Ascending aorta (tissue), 2 donors: ENCODE measurements at regions of chr5 and their contacts with region 1.

Region 1: DNA sequence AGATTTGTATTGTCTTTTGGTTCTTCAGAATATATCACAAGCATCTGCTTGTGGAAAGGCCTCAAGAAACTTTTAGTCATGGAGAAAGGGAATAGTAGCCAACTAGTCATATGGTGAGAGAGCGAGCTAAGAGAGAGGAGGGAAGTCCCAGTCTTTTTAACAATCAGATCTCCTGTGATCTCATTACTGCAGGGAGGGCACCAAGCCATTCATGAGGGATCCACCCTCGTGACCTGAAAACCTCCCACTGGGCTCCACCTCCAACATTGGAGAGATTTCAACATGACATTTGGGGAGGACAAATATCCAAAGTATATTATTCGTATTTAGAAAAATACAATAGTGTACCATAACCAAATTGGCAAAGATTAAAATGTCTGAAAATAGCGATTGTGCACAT is 99.0 kb downstream of the GABRA1 start:
- DNase-seq: no peak
- H3K4me3 ChIP-seq: no peak overlapping the region
- H3K27ac ChIP-seq: no peak overlapping the region
- H3K4me1 ChIP-seq: no peaks in the 10 kb centered on the region
- H3K27me3 ChIP-seq: no peaks in the 10 kb centered on the region
- CTCF ChIP-seq: no peak

Region 2: DNA sequence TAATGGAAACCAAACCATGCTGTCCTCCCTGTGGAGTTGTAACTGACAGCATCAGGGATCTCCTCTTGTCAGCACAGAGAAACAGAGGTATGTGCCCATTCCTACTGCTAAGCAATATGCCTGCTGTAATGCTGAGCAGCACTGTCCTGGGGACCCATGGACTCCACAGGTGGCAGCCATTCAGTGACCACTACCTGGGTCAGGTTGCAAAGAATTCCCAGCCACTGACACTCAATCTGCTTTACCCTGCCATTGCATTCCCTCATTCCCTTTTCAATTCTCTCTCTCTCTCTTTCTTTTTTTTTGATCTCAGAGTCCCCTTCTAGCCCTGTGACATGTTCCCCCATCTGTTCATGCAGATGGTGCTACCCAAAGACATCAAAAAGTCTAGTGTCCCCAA is 504.4 kb before region 1 on chr5:
- intact Hi-C with region 1: loop called (anchors 5 kb)
- DNase-seq: no peak
- H3K4me3 ChIP-seq: no peak overlapping the region
- H3K27ac ChIP-seq: no peak overlapping the region
- H3K4me1 ChIP-seq: no peaks in the 10 kb centered on the region
- H3K27me3 ChIP-seq: no peaks in the 10 kb centered on the region
- CTCF ChIP-seq: no peak